K562 (cell line): ENCODE measurements at regions of chr15 and their contacts with region 1.

Region 1: GRCh38 chr15:101469520-101470288 is 19.8 kb downstream of the PCSK6 start:
- DNase-seq: peak in 2 of 4 experiments; percentile 57 to 59
- ATAC-seq: peak; percentile 89
- H3K4me3 ChIP-seq: no peak overlapping the region
- H3K27ac ChIP-seq: peak overlapping the region; percentile 56; the same call in 2 of the 3 replicates
- H3K4me1 ChIP-seq: peaks cover 12 to 17% of the 10 kb centered on the region in 2 experiments; a peak in 4 of 5 replicates
- H3K27me3 ChIP-seq: peaks cover 3 to 6% of the 10 kb centered on the region in 2 experiments; a peak in 3 of 5 replicates
- CTCF ChIP-seq: no peak
- EP300 ChIP-seq: no peak
- POLR2A ChIP-seq: no peak
- RAD21 ChIP-seq: no peak

Region 2: DNA sequence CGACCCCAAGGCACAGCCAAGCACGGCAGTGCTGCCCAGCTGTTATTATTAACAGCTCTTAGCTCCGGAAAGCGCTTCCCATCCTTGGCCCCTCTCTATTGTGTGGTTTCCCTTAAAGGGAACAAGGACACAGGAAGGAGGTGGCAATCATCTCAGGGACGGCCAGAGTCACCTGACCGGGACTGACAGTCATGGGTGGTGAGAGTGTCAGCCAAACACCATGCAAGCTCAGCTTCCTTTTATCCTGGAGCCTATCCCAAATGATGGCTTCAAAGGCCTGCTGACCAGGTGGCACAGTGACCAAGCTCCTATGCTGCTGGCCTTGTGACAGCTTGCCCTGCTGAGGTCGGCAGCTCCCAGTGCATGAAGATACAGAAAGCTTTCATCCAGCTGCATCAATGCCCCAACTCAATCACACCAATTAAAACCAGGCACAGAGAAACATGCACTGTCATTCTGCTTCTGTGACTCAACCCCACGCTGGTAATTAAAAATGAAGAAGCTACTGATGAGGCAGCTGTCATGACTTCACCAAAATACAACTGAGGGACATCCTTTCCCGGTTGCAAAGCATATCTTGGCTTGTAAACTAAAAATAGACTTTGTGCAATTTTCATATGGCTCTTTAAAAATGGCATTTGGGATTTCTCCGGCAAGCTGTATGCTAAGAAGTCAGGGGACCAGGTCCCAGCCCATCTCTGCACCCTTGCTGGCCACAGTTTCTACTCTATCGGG is 14.2 kb before region 1 on chr15:
- CTCF ChIA-PET with region 1: no interaction called
- POLR2A ChIA-PET with region 1: interaction called, 16 read pairs
- in situ Hi-C with region 1: no loop called
- intact Hi-C with region 1: no loop called
- DNase-seq: peak in 2 of 4 experiments; percentile 58 to 63
- ATAC-seq: peak; percentile 33
- H3K4me3 ChIP-seq: no peak overlapping the region
- H3K27ac ChIP-seq: peak overlapping the region; percentile 76; the same call in 2 of the 3 replicates
- H3K4me1 ChIP-seq: peaks cover 31 to 56% of the 10 kb centered on the region in 2 experiments
- H3K27me3 ChIP-seq: peaks cover 0 to 5% of the 10 kb centered on the region in 2 experiments; a peak in 1 of 5 replicates
- CTCF ChIP-seq: no peak
- EP300 ChIP-seq: 0 out of 2 replicates have a peak, but pooled peaks have one; percentile 18
- POLR2A ChIP-seq: no peak
- RAD21 ChIP-seq: 0 out of 4 replicates have a peak, but pooled peaks of 1 of the 2 experiments have one; percentile 1